Sciatic nerve (tissue), 2 donors: ENCODE measurements at regions of chr5 and their contacts with region 1.

Region 1: DNA sequence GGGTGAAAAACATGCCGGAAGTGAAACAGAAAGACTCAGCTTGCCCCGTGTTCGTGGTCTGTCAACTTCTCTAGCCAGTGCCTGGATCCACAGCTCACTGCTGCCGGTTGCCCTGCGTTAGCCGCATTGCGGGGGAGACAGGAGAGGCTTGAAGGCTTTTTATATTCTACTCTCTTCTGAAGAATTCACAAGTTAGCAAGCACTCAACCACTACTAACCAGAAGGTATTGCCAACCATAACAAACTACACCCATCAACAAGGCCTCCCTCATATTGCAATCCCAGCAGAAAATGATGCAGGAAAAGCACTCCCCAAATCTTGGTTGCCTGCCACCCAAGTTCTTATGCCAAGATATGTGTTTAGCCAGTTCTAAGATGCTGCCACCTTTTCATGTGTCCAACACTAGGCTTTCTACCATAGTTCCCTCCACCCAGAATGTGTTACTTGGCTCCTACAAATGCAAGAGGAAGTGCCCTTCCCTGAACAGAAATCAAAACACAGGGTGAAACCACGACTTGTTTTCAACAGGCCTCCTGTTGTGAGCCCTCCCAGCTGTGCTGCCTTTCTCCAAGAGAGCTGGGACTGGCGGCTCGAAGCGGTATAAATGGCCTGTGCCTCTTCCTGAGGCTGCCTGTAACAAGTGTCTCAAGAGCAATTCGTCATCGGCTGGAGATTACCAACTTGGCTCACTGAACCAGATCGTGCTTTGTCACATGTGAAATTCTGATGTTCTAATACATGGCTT is 129.0 kb downstream of the SNX18 start:
- DNase-seq: peak; percentile 78
- ATAC-seq: peak; percentile 92

Region 2: GRCh38 chr5:53023969-53024368 is 1622.6 kb before region 1 on chr5:
- intact Hi-C with region 1: loop called (anchors 5 kb)
- DNase-seq: no peak
- ATAC-seq: peak; percentile 85

Region 3: DNA sequence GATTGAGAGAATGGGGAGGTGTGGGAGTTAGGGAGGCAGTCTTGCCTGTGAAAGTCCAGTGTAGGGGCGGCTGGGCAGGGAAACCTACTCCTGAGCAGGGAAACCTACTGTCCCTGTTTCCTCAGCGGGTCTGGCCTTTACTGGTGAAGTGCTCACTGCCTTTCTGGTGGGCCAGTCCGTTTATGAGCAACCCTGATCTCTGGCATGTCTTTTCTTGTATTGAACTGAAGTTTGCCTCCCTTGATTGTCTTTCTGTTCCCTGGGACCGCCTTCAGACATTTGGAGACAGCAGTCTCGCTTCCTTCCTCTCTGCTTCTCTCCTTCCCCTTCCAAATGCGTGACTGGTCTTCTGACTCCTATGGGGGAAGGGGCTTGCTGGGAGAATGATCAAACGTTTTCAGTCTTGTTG is 126.1 kb before region 1 on chr5:
- intact Hi-C with region 1: loop called (anchors 10 kb)
- DNase-seq: no peak
- ATAC-seq: peak; percentile 48

Region 4: GRCh38 chr5:54601411-54602230 is 44.9 kb before region 1 on chr5:
- intact Hi-C with region 1: no loop called
- DNase-seq: no peak
- ATAC-seq: peak; percentile 84

Region 5: GRCh38 chr5:55626790-55627189 is 980.3 kb after region 1 on chr5:
- intact Hi-C with region 1: no loop called
- DNase-seq: no peak
- ATAC-seq: no peak